Motor neuron (in vitro differentiated cells): ENCODE measurements at regions of chr3 and their contacts with region 1.

Region 1: GRCh38 chr3:38738630-38739395 is 77.2 kb downstream of the SCN10A start:
- ATAC-seq: peak in 3 of 8 experiments; percentile 72 to 83 (median 74)
- H3K4me3 ChIP-seq: no peak overlapping the region
- H3K27ac ChIP-seq: no peak overlapping the region
- H3K4me1 ChIP-seq: no peaks in the 10 kb centered on the region

Region 2: DNA sequence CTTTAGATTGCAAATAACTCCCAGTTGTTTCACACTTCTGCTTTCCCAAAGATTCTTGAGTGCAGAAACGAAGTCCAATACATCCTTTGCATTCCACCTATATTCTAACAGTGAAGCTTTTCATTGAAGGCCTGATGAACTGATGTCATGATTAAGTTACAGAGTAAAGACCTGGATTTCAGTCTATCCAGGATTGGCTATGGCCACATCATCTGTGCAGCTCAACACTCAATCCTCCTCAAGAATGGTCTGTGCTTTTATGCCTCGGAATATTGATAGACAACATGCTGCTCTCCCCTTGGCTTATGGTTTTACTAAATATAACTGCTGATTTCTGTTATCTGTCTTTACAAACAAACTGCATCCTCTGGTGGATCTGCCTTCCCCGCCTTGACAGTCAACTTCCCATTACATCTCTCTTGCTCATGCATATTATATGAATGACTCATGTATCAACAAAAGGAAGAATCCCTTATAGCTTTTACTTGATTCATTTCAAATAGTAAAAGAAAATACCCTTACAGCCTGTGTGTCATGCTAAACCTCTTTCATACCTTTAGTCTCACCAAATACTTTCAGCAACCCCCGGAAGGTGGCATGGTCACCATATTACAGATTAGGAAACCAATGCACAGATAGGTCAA is 253.4 kb after region 1 on chr3:
- in situ Hi-C with region 1: loop called in 1 of 9 experiments (anchors 25 kb)
- ATAC-seq: peak in 3 of 8 experiments; percentile 54 to 88 (median 86)
- H3K4me3 ChIP-seq: no peak overlapping the region
- H3K27ac ChIP-seq: no peak overlapping the region
- H3K4me1 ChIP-seq: no peaks in the 10 kb centered on the region